ENCODE measurements at regions of chr11 and their contacts with region 1.

Region 1: GRCh38 chr11:47248664-47249377 is at the start of gene ACP2:
- DNase-seq: peak; percentile 94
- ATAC-seq: peak; percentile 97
- H3K4me3 Mint-ChIP-seq: peak within 1 kb of the TSS; percentile 95
- H3K27ac Mint-ChIP-seq: peak within 1 kb of the TSS; percentile 98
- H3K4me1 Mint-ChIP-seq: peaks cover 24% of the 10 kb centered on the region
- H3K27me3 Mint-ChIP-seq: no peaks in the 10 kb centered on the region
- CTCF ChIP-seq: no peak
- total RNA-seq, gene ACP2: 9.4 to 13.4 TPM

Region 2: DNA sequence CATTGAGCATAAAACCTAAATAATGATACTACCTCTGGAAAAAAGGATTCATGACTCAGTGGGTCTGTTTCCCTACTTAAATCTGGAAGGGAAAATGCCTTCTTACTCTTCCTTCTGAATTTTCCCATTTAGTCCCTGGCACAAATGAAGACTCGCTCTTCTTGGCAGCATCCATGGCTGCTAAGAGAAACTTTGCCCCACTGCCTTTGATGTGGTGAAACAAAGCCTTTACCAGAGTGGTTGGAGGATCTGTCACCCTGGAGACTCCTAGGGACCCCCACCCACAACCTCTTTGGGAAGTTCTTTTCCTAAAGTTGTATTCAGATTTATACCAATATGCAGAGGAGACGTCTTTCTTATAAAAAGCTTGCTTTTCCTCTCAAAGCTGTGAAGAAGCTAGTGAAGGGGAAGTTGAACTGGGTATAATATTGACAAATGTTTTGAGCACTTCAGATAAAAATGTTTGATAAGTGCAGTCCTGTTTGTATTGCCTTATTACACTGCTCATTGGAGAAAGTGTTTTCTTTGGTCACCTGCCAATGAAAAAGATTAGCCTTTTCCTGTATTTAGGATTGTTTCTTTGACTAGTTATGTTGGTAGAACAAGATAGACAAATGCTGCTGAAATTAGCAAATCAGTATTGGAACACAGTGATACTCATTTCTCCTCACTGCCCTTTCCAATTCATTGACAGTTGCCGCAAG is 149.5 kb before region 1 on chr11:
- CTCF ChIA-PET with region 1: no interaction called
- POLR2A ChIA-PET with region 1: no interaction called
- intact Hi-C with region 1: no loop called
- DNase-seq: no peak
- ATAC-seq: no peak
- H3K4me3 Mint-ChIP-seq: no peak overlapping the region
- H3K27ac Mint-ChIP-seq: no peak overlapping the region
- H3K4me1 Mint-ChIP-seq: peaks cover 9% of the 10 kb centered on the region
- H3K27me3 Mint-ChIP-seq: no peaks in the 10 kb centered on the region
- CTCF ChIP-seq: no peak

Region 3: GRCh38 chr11:47233989-47234668 is 14.7 kb before region 1 on chr11:
- CTCF ChIA-PET with region 1: interaction called, 23 read pairs
- POLR2A ChIA-PET with region 1: interaction called, 118 read pairs
- intact Hi-C with region 1: no loop called
- DNase-seq: peak; percentile 19
- ATAC-seq: peak; percentile 42
- H3K4me3 Mint-ChIP-seq: no peak overlapping the region
- H3K27ac Mint-ChIP-seq: peak overlapping the region; percentile 56
- H3K4me1 Mint-ChIP-seq: peaks cover 22% of the 10 kb centered on the region
- H3K27me3 Mint-ChIP-seq: no peaks in the 10 kb centered on the region
- CTCF ChIP-seq: no peak

Region 4: GRCh38 chr11:47269002-47269828 is 20.4 kb after region 1 on chr11:
- CTCF ChIA-PET with region 1: interaction called, 9 read pairs
- POLR2A ChIA-PET with region 1: interaction called, 14 read pairs
- intact Hi-C with region 1: no loop called
- DNase-seq: peak; percentile 89
- ATAC-seq: peak; percentile 61
- H3K4me3 Mint-ChIP-seq: peak overlapping the region; percentile 76
- H3K27ac Mint-ChIP-seq: peak overlapping the region; percentile 98
- H3K4me1 Mint-ChIP-seq: peaks cover 54% of the 10 kb centered on the region
- H3K27me3 Mint-ChIP-seq: no peaks in the 10 kb centered on the region
- CTCF ChIP-seq: peak; percentile 12